Psoas muscle (tissue), 8 donors: ENCODE measurements at regions of chr2 and their contacts with region 1.

Region 1: DNA sequence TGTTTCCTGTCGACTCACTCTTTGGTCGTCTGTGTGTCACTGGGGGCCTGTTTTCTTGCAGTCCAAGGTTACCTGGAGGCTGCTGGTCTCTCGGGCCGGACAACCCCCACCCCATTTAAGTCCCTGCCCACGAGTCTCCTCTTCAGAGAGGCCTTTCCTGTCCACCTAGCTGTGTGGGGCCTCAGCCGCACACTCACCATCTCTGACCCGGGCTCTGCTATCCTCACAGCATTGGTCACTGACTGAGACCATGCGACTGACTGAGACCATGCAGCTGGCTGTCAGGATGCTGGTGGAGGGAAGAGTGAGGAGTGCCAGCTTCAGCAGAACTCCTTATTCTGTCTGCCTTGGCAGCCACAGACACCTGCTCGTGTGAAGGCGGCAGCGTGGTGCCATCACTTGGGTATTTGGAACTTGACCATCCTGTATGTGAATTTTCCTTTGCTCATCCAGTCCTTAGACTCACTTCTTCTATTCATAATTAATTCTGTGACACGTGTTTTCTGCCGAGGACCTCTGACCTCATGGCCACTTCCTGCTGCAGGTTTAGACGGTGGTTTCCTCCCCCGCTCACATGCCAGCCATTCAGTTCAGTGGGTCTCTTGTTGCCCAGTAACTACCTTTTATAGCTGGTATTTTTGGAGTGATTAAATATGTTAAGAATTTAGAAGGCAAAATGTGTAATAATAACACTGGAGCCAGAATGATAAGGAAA is 47.5 kb upstream of the ASB1 start:
- DNase-seq: no peak
- ATAC-seq: peak; percentile 22 to 36 (median 31)
- H3K4me3 ChIP-seq: no peak overlapping the region
- H3K27ac ChIP-seq: peak overlapping the region; percentile 58
- H3K4me1 ChIP-seq: peaks cover 16% of the 10 kb centered on the region
- H3K27me3 ChIP-seq: no peaks in the 10 kb centered on the region
- CTCF ChIP-seq: no peak

Region 2: GRCh38 chr2:238320246-238320647 is 59.0 kb before region 1 on chr2 and contains the start of gene TRAF3IP1:
- intact Hi-C with region 1: no loop called
- DNase-seq: peak; percentile 95 to 97
- ATAC-seq: peak; percentile 95 to 97 (median 96)
- H3K4me3 ChIP-seq: peak within 1 kb of the TSS; percentile 82
- H3K27ac ChIP-seq: peak within 1 kb of the TSS; percentile 86
- H3K4me1 ChIP-seq: peaks cover 33% of the 10 kb centered on the region
- H3K27me3 ChIP-seq: no peaks in the 10 kb centered on the region
- CTCF ChIP-seq: no peak
- total RNA-seq, gene TRAF3IP1: 14.9 to 24.7 (median 18.4) TPM

Region 3: DNA sequence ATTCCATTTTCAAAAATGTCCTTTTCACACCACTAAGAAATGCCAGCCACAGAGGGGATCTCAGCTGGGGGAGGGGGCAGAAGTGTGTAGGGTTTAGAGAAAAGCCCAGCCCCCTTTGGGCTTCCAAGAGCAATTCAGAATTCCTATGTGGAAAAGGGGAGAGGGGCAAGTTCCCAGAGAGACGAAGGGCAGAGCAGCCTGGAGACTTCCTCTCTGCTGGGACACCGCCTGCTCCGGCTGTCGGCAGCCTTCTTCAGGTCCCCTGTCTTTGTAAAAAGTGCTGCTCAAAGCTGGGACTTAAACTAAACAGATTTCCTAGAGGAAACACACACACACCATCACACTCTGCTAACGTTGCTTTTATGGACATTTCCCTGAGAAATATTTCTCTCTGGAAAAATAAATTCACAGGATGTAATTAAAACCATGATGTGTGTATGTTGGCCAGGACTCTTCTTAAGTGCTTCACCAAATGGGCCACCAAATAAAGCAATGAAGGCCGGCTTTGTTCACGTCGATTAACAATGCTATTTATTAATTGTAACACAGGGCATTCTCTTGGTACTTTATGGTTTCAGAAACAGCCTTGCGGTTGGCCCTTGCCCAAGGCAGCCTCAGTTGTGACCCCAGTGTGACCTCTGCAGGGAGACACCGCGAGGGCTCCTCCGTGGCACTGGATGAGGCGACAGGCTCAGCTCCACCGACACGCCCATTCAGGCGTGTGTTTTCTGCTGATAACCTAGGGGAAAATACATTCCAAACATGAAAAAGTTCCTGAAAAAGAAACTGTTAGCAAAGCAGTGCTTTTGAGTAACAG is 41.8 kb after region 1 on chr2:
- intact Hi-C with region 1: loop called in 1 of 2 experiments (anchors 5 kb)
- DNase-seq: no peak
- ATAC-seq: no peak
- H3K4me3 ChIP-seq: no peak overlapping the region
- H3K27ac ChIP-seq: no peak overlapping the region
- H3K4me1 ChIP-seq: peaks cover 18% of the 10 kb centered on the region
- H3K27me3 ChIP-seq: no peaks in the 10 kb centered on the region
- CTCF ChIP-seq: no peak

Region 4: DNA sequence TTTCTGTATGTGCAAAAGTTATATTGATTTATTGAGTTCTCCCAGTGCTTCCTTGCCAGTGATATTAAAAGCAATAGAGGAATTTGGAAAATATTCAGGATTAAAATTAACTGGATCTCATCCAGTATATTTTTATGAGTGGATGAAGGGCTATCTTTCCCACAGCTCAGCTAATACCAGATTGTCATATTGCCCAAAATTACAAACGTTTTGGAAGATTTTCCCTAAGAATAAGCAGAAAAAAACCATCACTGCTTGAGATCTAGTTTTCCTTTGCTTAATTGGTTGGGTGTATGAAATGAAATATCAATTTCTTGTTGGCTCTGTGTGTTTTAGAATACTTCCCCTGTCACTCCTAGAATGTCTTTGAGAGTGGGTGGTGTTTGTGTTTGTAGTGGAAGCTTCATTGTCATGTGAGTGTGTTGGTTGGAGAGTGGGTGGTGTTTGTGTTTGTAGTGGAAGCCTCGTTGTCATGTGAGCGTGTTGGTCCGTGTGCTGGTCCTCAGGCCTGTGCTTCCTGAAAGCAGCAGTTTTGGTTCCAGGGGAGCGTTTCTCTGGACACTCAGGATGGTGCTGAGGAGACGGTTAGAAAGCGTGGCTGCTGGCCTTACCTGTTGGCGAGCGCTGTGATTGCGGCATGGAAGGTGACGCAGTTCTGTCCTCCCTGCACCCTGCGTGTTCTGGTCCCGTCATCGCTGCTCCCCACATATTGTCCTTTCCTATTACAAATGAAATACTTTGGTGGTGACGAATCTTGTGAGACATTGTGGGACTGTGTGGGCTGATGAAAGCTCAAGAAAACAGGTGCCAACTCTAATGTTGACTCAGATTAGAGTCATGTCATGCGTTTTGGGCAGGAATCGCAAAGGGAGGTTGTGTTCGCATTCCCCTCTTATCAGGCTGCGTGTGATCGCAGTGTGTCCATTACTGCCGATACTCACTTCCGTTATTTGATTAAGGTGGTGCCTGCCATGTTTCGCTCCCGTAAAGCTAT is 59.9 kb after region 1 on chr2:
- intact Hi-C with region 1: no loop called
- DNase-seq: peak in 1 of 2 donors; percentile 51
- ATAC-seq: peak; percentile 54 to 92 (median 74)
- H3K4me3 ChIP-seq: no peak overlapping the region
- H3K27ac ChIP-seq: peak overlapping the region; percentile 5
- H3K4me1 ChIP-seq: peaks cover 21% of the 10 kb centered on the region
- H3K27me3 ChIP-seq: no peaks in the 10 kb centered on the region
- CTCF ChIP-seq: no peak